Naive thymus-derived CD4-positive, alpha-beta T cell (primary cell): ENCODE measurements at regions of chr19 and their contacts with region 1.

Region 1: GRCh38 chr19:45779231-45780145 is 2.8 kb downstream of the DMPK start:
- DNase-seq: peak; percentile 41 to 94 (median 59)
- ATAC-seq: peak; percentile 95
- H3K4me3 ChIP-seq: peak overlapping the region; percentile 59
- H3K4me3 Mint-ChIP-seq: peak overlapping the region; percentile 69 to 95 (median 81)
- H3K27ac ChIP-seq: no peak overlapping the region
- H3K27ac Mint-ChIP-seq: peak overlapping the region in 1 of 9 donors; percentile 69
- H3K4me1 ChIP-seq: peaks cover 7 to 17% of the 10 kb centered on the region in 2 donors
- H3K4me1 Mint-ChIP-seq: peaks cover 13 to 28% (median 18%) of the 10 kb centered on the region in 7 donors
- H3K27me3 ChIP-seq: peaks cover 0 to 18% of the 10 kb centered on the region in 2 donors
- H3K27me3 Mint-ChIP-seq: peaks cover 15 to 39% (median 36%) of the 10 kb centered on the region in 5 donors

Region 2: DNA sequence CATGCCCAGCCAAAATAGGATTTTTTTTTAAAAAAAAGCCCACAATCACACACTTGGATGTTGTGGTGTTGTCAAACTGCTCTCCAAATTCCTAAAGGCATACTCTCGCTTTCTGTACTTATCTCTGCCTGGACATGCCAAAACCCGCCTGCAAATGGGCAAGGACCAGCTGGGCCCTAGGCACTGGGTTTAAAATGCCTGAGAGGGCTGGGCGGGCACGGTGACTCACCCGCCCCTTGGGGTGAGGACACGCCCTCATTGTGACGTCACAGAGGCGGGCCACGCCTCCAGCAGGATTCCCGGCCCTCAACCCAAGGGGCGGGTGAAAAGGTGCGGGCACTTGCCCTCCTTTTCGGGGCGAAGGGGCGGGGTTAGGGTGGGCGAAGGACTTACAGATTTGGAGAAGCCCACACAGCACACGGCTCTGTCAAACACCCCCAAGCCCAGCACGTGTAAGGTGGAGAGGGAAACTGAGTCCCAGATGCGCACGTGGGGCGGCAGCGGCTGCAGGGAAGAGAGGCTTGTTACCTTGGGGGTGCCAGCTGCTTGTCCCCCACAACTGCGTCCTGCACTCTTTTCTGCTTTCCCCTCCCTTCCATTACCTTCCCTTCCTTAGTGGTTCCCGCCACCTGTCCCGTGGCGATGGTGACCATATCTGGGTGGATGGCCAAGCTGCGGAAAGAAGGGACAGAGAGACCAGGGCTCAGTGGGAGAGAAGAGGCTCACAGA is 146.9 kb before region 1 on chr19:
- CTCF ChIA-PET with region 1: no interaction called
- POLR2A ChIA-PET with region 1: no interaction called
- intact Hi-C with region 1: no loop called
- DNase-seq: peak in 1 of 9 donors; percentile 51
- ATAC-seq: peak; percentile 38
- H3K4me3 ChIP-seq: no peak overlapping the region
- H3K4me3 Mint-ChIP-seq: no peak overlapping the region
- H3K27ac ChIP-seq: no peak overlapping the region
- H3K27ac Mint-ChIP-seq: no peak overlapping the region
- H3K4me1 ChIP-seq: no peaks in the 10 kb centered on the region
- H3K4me1 Mint-ChIP-seq: peaks cover 0 to 11% (median 0%) of the 10 kb centered on the region in 7 donors
- H3K27me3 ChIP-seq: no peaks in the 10 kb centered on the region
- H3K27me3 Mint-ChIP-seq: no peaks in the 10 kb centered on the region

Region 3: GRCh38 chr19:45817010-45817724 is 37.7 kb after region 1 on chr19:
- CTCF ChIA-PET with region 1: no interaction called
- POLR2A ChIA-PET with region 1: no interaction called
- intact Hi-C with region 1: loop called in 1 of 2 experiments (anchors 2 kb)
- DNase-seq: peak; percentile 88 to 96 (median 93)
- ATAC-seq: peak; percentile 100
- H3K4me3 ChIP-seq: no peak overlapping the region
- H3K4me3 Mint-ChIP-seq: peak overlapping the region in 5 of 10 donors; percentile 16 to 54 (median 45)
- H3K27ac ChIP-seq: no peak overlapping the region
- H3K27ac Mint-ChIP-seq: peak overlapping the region in 7 of 9 donors; percentile 25 to 93 (median 42)
- H3K4me1 ChIP-seq: peaks cover 0 to 4% of the 10 kb centered on the region in 2 donors
- H3K4me1 Mint-ChIP-seq: peaks cover 0 to 7% (median 5%) of the 10 kb centered on the region in 7 donors
- H3K27me3 ChIP-seq: no peaks in the 10 kb centered on the region
- H3K27me3 Mint-ChIP-seq: peaks cover 0 to 20% (median 17%) of the 10 kb centered on the region in 5 donors